Right ventricle myocardium superior (tissue), 1 donor: ENCODE measurements at regions of chr1 and their contacts with region 1.

Region 1: DNA sequence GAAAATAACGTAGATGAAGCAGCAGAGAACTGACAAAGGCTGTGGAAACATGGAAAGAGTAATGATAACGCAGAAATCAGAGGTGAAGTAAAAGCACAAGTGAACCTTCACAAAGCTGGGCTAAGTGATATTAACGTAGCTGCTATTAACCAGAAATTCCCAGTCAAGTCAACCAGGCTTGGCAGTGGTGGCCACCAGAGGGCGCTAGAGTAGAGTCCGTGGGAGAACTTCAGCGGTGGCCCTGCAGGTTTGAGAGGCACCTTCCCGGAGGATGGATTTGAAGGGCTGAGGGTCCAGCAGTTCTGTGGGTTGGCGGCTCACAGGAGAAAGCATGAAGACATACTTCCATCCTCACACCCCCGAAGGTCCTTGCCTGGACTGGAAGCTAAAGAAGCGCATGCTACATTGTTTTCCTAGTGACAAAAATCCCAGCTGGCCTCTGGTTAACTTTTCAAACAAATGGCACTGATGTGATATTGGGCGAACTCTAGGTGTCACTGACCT is 81.7 kb upstream of the ZNF648 start:
- DNase-seq: peak; percentile 96
- ATAC-seq: peak; percentile 81

Region 2: GRCh38 chr1:182198049-182198501 is 54.9 kb after region 1 on chr1:
- intact Hi-C with region 1: loop called (anchors 10 kb)
- DNase-seq: no peak
- ATAC-seq: no peak

Region 3: DNA sequence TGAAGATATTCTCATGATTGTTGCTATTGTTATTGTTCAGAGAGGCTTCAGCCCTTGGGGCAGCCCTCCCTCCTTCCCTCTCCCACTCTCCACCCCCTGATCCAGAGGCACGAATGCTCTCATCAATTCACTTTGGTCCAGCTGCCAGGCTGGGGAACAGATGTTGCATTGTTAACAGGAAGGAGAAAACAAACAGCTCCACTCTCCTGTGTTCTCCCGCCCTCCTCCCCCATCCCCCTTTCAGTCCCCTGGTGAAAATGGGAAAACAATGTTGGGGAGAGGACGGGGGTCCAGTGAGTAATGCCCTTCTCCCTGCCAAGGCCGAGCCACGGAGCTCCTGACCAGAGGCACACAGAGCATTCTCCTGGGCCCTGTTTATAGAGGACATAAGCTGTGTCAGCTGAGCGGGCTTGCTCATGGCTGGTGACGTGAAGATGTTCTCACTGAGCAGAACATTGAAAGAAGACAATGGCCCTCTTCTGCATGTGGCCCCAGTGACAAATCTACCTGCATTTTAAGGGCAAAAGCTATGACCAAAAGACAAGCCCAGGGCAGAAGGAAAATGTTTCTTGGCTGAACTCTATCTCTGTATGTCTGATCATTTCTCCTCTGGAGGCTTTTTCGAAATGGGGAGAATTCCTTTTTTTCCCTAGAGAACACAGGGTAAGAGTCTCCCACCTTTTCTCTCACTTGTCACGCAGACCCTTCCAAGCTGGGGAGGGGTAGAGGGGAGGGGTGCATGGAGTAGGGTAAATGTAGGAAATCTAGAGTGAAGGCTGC is 136.7 kb after region 1 on chr1:
- intact Hi-C with region 1: loop called (anchors 10 kb)
- DNase-seq: peak; percentile 69
- ATAC-seq: peak; percentile 81

Region 4: GRCh38 chr1:182317611-182318161 is 174.5 kb after region 1 on chr1:
- intact Hi-C with region 1: loop called (anchors 10 kb)
- DNase-seq: no peak
- ATAC-seq: no peak

Region 5: GRCh38 chr1:182397771-182398393 is 254.7 kb after region 1 on chr1:
- intact Hi-C with region 1: loop called (anchors 2 kb)
- DNase-seq: no peak
- ATAC-seq: no peak